K562 (cell line): ENCODE measurements at regions of chr5 and their contacts with region 1.

Region 1: GRCh38 chr5:38193015-38193581 is 65.3 kb upstream of the EGFLAM start:
- DNase-seq: peak; percentile 74 to 85 (median 82)
- ATAC-seq: peak; percentile 89
- H3K4me3 ChIP-seq: no peak overlapping the region
- H3K27ac ChIP-seq: no peak overlapping the region
- H3K4me1 ChIP-seq: 0 out of 5 replicates have a peak, but pooled peaks cover 0 to 2% of the 10 kb centered on the region in 2 experiments
- H3K27me3 ChIP-seq: peaks cover 17 to 50% of the 10 kb centered on the region in 2 experiments
- CTCF ChIP-seq: peak; percentile 82 to 93 (median 91)
- EP300 ChIP-seq: no peak
- POLR2A ChIP-seq: no peak
- RAD21 ChIP-seq: peak; percentile 92 to 93

Region 2: DNA sequence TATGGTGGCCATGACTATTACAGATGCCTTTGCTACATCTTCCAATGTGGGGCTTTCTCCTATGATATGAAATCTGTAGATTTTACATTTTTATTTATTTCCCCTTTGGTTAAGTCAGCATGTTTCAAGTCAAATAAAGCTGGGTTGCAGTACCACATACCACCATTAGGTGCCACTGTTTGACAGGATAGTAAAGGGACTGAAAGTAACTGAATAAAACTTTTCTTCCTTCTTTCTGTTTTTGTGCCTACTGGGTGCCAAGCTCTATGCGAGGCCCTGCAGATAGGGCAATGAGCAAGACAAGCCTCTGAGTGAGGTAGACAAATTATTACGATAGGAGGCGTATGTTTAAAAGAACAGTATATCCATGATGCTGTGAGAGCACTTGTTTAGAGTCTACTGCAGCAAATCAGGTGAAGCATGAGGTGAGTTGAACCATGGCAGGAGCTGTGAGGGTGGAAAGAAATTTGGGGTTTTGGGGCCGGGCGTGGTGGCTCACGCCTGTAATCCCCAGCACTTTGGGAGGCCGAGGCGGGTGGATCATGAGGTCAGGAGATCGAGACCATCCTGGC is 418.1 kb before region 1 on chr5:
- CTCF ChIA-PET with region 1: no interaction called
- POLR2A ChIA-PET with region 1: interaction called, 3 read pairs
- in situ Hi-C with region 1: no loop called
- intact Hi-C with region 1: loop called (anchors 1 kb)
- DNase-seq: peak; percentile 33 to 64 (median 45)
- ATAC-seq: no peak; the same call in 2 of the 3 replicates
- H3K4me3 ChIP-seq: no peak overlapping the region
- H3K27ac ChIP-seq: no peak overlapping the region
- H3K4me1 ChIP-seq: no peaks in the 10 kb centered on the region
- H3K27me3 ChIP-seq: no peaks in the 10 kb centered on the region
- CTCF ChIP-seq: peak; percentile 58 to 79 (median 74); a peak in 5 of 6 replicates
- EP300 ChIP-seq: no peak
- POLR2A ChIP-seq: no peak
- RAD21 ChIP-seq: peak; percentile 37 to 74

Region 3: DNA sequence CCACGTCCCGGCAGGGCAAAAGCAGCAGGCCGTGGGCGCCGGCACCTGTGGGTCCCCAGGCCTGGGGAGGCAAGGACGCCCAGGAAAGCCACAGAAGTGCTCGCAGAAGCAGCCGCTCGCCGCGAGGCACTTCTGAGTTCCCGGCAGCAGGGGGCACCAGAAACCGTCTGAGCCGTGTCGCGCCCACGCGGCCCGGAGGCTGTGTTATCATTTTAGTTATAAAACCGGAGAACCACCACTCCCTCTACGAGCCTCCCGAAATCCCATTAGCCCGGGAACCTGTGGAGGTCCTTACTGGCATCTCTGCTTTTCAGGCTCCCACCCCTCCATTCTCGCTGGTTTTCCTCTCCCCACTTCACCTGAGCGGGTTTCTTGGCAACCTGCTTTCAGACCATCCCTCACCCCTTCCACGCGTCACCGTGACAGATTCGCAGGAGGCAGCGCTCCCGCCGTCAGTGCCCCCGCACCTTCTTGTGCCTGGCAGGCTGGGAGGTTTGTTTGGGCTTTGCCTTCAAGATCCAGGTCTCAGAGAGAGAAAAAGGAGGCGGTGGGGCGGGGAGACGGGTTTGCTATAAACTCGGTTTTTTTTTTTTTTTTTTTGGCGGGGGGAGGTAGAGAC is 355.6 kb before region 1 on chr5:
- CTCF ChIA-PET with region 1: interaction called, 9 read pairs
- POLR2A ChIA-PET with region 1: interaction called, 3 read pairs
- in situ Hi-C with region 1: loop called (anchors 10 kb)
- intact Hi-C with region 1: loop called (anchors 1 kb)
- DNase-seq: peak; percentile 73 to 78 (median 76)
- ATAC-seq: peak; percentile 95
- H3K4me3 ChIP-seq: no peak overlapping the region
- H3K27ac ChIP-seq: no peak overlapping the region
- H3K4me1 ChIP-seq: peaks cover 0 to 31% of the 10 kb centered on the region in 2 experiments; a peak in 2 of 5 replicates
- H3K27me3 ChIP-seq: peaks cover 49 to 79% of the 10 kb centered on the region in 2 experiments
- CTCF ChIP-seq: peak; percentile 80 to 85 (median 81)
- EP300 ChIP-seq: no peak
- POLR2A ChIP-seq: no peak
- RAD21 ChIP-seq: peak; percentile 59 to 87

Region 4: DNA sequence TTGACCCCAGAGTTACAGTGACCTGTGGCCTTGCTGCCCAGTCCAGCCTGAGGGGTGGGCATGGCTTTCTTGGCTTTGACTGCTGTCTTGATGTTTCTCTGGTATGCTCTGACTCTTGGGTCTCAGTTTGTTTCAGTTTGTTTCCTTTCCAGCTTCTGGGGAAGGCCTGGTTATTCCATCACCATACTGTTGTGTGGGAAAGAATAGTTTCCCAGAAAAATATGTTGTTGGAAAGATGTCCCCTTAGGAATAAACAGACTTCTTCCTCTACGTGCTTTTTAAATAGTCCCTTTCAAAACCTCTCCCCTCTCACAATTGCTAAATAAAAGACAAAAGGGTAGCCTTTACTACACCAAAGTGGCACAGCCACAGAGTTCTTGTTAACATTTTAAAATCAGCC is 114.7 kb after region 1 on chr5:
- CTCF ChIA-PET with region 1: no interaction called
- POLR2A ChIA-PET with region 1: no interaction called
- in situ Hi-C with region 1: no loop called
- intact Hi-C with region 1: no loop called
- DNase-seq: no peak
- ATAC-seq: no peak
- H3K4me3 ChIP-seq: no peak overlapping the region
- H3K27ac ChIP-seq: no peak overlapping the region
- H3K4me1 ChIP-seq: no peaks in the 10 kb centered on the region
- H3K27me3 ChIP-seq: peaks cover 0 to 4% of the 10 kb centered on the region in 2 experiments; a peak in 1 of 5 replicates
- CTCF ChIP-seq: no peak
- EP300 ChIP-seq: no peak
- POLR2A ChIP-seq: no peak
- RAD21 ChIP-seq: no peak

Region 5: GRCh38 chr5:40052808-40053207 is 1859.7 kb after region 1 on chr5:
- CTCF ChIA-PET with region 1: no interaction called
- POLR2A ChIA-PET with region 1: no interaction called
- in situ Hi-C with region 1: no loop called
- intact Hi-C with region 1: no loop called
- DNase-seq: peak; percentile 21 to 22 (median 22)
- ATAC-seq: no peak
- H3K4me3 ChIP-seq: no peak overlapping the region
- H3K27ac ChIP-seq: no peak overlapping the region
- H3K4me1 ChIP-seq: no peaks in the 10 kb centered on the region
- H3K27me3 ChIP-seq: no peaks in the 10 kb centered on the region
- CTCF ChIP-seq: no peak
- EP300 ChIP-seq: 0 out of 2 replicates have a peak, but pooled peaks have one; percentile 24
- POLR2A ChIP-seq: no peak
- RAD21 ChIP-seq: no peak